PC-9 (cell line): ENCODE measurements at regions of chr1 and their contacts with region 1.

Region 1: GRCh38 chr1:222334026-222334680 is 213.8 kb downstream of the HHIPL2 start:
- DNase-seq: no peak
- H3K4me3 ChIP-seq: no peak overlapping the region
- H3K27ac ChIP-seq: no peak overlapping the region
- H3K4me1 ChIP-seq: no peaks in the 10 kb centered on the region
- H3K27me3 ChIP-seq: no peaks in the 10 kb centered on the region
- CTCF ChIP-seq: no peak

Region 2: DNA sequence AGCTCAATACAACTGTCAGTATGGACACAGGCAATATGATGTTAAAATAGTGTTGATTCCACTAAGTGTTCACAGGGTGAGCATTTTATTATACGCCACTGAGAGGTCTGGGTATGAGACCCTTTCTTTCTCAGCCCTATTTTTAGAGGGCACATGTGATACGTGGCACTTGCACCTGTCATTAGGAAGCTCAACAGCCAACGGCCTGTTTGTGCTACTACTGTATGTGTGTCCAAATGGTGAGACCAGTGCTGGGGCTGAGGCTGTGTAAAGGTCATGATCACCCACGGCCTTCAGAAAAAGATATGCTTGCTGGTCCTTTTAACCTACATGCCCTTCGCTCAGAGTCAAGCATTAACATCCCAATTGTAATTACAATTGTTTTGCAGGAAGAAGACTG is 768.4 kb before region 1 on chr1:
- CTCF ChIA-PET with region 1: no interaction called
- POLR2A ChIA-PET with region 1: interaction called, 10 read pairs
- intact Hi-C with region 1: no loop called
- DNase-seq: no peak
- H3K4me3 ChIP-seq: no peak overlapping the region
- H3K27ac ChIP-seq: no peak overlapping the region
- H3K4me1 ChIP-seq: peaks cover 5% of the 10 kb centered on the region; the same call in 1 of the 2 replicates
- H3K27me3 ChIP-seq: no peaks in the 10 kb centered on the region
- CTCF ChIP-seq: no peak

Region 3: DNA sequence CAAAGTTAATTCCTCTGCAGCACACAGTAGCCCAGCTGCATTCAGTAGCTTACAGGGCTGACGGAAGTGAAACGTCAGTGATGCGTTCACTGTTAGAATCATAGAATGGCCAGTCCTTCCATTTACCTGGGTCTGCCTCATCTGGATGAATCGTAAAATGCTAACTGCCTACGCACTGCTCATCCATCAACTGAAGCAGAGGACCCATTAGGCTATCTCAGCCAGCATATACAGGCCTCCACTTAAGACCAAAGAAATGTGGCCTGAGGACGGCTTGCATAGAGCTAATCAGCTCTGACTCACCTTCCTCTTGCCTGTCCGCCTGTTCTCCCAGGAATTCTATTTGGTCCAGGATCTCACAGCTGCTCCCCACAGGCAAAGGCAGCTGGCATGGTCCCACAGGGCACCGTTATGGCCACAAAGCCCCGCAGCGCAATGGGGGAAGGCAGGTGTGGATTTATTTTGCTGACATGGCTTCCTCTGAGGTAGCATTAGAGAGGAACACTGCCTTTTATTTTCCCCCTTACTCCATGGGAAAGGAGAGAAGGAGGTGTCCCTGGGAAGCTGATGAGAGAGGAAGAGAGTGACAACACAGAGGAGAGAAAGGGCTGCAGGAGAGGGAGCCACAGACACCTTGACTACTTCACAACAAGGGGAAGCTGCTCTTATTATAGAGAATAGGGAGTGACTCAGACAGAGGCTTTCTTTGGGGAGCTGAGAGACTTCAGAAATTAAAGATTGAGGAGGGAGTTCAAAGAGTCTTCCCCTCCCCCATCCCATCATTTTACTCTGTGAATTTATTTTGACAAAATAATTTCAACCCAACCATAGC is 36.1 kb after region 1 on chr1:
- CTCF ChIA-PET with region 1: no interaction called
- POLR2A ChIA-PET with region 1: no interaction called
- intact Hi-C with region 1: loop called (anchors 2 kb)
- DNase-seq: no peak
- H3K4me3 ChIP-seq: no peak overlapping the region
- H3K27ac ChIP-seq: no peak overlapping the region
- H3K4me1 ChIP-seq: peaks cover 16% of the 10 kb centered on the region
- H3K27me3 ChIP-seq: 0 out of 2 replicates have a peak, but pooled peaks cover 5% of the 10 kb centered on the region
- CTCF ChIP-seq: no peak